B cell (primary cell): ENCODE measurements at regions of chr1 and their contacts with region 1.

Region 1: DNA sequence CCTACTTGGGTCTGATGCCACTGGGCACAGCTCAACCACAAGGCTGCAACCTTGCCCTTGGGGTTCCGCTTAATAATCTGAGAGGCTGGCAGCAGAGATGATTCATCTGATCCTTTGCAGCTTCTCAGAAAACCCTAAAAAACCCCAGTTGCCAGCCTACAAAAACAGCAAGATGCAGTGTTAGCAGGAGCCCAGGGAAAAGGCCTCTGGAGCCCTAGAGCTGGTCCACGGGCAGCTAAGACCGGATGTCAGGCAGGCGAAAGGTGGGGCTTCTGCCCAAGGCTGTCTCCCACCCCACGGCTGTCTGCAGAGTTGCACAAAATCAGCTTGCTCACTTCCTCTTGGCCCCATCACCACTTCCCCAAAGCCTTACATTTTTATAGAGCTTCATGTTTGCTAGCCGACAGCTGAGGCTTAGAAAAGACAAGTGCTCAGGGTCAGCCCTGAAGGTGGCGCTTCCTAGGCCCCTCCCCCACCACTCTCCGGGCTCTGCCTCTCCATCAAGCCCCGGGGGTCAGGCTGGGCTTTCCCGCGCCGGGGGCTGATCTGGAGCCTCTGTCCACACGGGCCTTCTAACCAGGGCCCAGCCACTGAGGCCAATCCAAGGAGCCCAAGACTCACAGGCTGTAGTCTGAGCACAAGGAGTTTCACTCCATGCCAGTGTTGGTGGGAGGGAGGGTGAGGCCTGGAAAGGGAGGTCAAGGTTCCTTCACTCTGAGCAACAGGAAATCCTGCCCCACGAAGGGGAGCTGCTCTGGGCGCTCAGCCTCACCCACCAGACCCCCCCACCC is 4.2 kb upstream of the ADORA3 start:
- DNase-seq: peak; percentile 90
- ATAC-seq: peak; percentile 70
- H3K4me3 ChIP-seq: peak overlapping the region; percentile 12 to 62 (median 59)
- H3K4me3 Mint-ChIP-seq: peak overlapping the region; percentile 79
- H3K27ac ChIP-seq: peak overlapping the region; percentile 88 to 98
- H3K27ac Mint-ChIP-seq: peak overlapping the region; percentile 95
- H3K4me1 ChIP-seq: peaks cover 64 to 69% of the 10 kb centered on the region in 2 donors
- H3K4me1 Mint-ChIP-seq: peaks cover 57% of the 10 kb centered on the region
- H3K27me3 ChIP-seq: no peaks in the 10 kb centered on the region
- H3K27me3 Mint-ChIP-seq: no peaks in the 10 kb centered on the region
- CTCF ChIP-seq: no peak

Region 2: GRCh38 chr1:111222308-111223125 is 285.1 kb before region 1 on chr1:
- CTCF ChIA-PET with region 1: interaction called, 14 read pairs
- POLR2A ChIA-PET with region 1: interaction called, 3 read pairs
- intact Hi-C with region 1: no loop called
- DNase-seq: peak; percentile 83
- ATAC-seq: peak; percentile 48
- H3K4me3 ChIP-seq: peak overlapping the region in 3 of 5 experiments; percentile 3 to 26 (median 5)
- H3K4me3 Mint-ChIP-seq: peak overlapping the region; percentile 72
- H3K27ac ChIP-seq: peak overlapping the region; percentile 46 to 92
- H3K27ac Mint-ChIP-seq: peak overlapping the region; percentile 91
- H3K4me1 ChIP-seq: peaks cover 85 to 87% of the 10 kb centered on the region in 2 donors
- H3K4me1 Mint-ChIP-seq: peaks cover 82% of the 10 kb centered on the region
- H3K27me3 ChIP-seq: no peaks in the 10 kb centered on the region
- H3K27me3 Mint-ChIP-seq: no peaks in the 10 kb centered on the region
- CTCF ChIP-seq: peak; percentile 89

Region 3: DNA sequence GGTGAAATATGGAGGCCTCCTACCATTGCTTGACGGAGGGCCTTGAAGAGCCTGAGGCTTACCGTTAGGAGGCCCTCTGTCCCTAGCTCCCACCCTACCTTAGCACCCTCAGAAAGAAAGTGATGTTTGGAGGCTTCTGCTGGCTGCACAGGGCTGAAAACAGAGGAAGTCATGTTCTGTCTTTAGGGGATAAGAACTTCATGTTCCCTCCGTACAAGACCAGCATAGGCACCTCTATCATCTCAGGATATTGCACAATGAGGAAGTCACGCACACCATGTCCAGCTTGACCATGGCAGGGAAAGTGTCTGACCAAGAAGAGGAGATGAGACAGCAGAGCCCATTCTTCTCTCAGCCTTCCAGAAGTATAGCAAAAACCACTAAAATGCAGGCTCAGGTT is 18.0 kb before region 1 on chr1:
- CTCF ChIA-PET with region 1: interaction called, 276 read pairs
- POLR2A ChIA-PET with region 1: interaction called, 3 read pairs
- intact Hi-C with region 1: no loop called
- DNase-seq: no peak
- ATAC-seq: peak; percentile 81
- H3K4me3 ChIP-seq: no peak overlapping the region
- H3K4me3 Mint-ChIP-seq: no peak overlapping the region
- H3K27ac ChIP-seq: no peak overlapping the region
- H3K27ac Mint-ChIP-seq: peak overlapping the region; percentile 80
- H3K4me1 ChIP-seq: no peaks in the 10 kb centered on the region
- H3K4me1 Mint-ChIP-seq: peaks cover 9% of the 10 kb centered on the region
- H3K27me3 ChIP-seq: no peaks in the 10 kb centered on the region
- H3K27me3 Mint-ChIP-seq: no peaks in the 10 kb centered on the region
- CTCF ChIP-seq: peak; percentile 36

Region 4: DNA sequence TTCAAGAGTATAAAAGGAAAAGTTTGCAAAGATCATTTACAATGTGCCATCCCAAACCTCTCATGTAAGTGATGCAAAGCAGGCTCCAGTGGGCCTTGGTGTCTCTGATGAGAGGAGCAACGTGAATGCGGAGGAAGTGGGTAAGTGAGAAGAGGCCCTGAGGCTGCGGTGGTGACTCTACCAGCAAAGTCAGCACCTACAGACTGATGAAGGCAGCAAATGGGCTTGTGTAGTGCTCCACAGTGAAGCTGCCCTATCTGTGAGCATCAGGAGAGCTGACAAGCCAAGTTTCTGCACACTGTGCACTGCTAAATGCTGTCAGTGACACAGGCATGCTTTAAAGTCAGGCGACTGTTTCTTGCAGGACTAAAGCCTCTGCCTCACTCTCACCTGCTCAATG is 96.4 kb after region 1 on chr1:
- CTCF ChIA-PET with region 1: interaction called, 11 read pairs
- POLR2A ChIA-PET with region 1: no interaction called
- intact Hi-C with region 1: no loop called
- DNase-seq: peak; percentile 57
- ATAC-seq: peak; percentile 71
- H3K4me3 ChIP-seq: no peak overlapping the region
- H3K4me3 Mint-ChIP-seq: peak overlapping the region; percentile 47
- H3K27ac ChIP-seq: peak overlapping the region; percentile 12 to 14
- H3K27ac Mint-ChIP-seq: peak overlapping the region; percentile 83
- H3K4me1 ChIP-seq: peaks cover 50 to 57% of the 10 kb centered on the region in 2 donors
- H3K4me1 Mint-ChIP-seq: peaks cover 64% of the 10 kb centered on the region
- H3K27me3 ChIP-seq: no peaks in the 10 kb centered on the region
- H3K27me3 Mint-ChIP-seq: no peaks in the 10 kb centered on the region
- CTCF ChIP-seq: no peak

Region 5: DNA sequence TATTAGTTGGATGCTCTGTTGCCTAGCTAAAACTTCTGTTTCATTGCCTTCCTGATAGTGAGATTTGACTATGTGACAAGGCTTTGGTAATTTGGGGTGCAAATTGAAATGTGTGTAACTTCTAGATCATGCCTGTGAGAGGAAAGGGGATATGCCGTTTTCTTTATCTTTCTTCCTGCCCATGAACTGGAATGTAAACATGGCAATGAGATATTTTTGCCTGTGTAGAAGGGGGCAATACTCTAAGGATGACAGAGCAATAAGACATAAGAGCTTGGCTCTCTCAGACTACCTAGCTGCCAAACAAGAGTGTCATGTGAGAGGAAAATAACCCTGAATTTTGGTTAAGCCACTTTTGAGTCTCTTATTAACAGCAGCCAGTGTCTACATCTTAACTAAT is 161.7 kb after region 1 on chr1:
- CTCF ChIA-PET with region 1: interaction called, 19 read pairs
- POLR2A ChIA-PET with region 1: no interaction called
- intact Hi-C with region 1: no loop called
- DNase-seq: no peak
- ATAC-seq: no peak
- H3K4me3 ChIP-seq: no peak overlapping the region
- H3K4me3 Mint-ChIP-seq: no peak overlapping the region
- H3K27ac ChIP-seq: peak overlapping the region in 1 of 2 donors; percentile 24
- H3K27ac Mint-ChIP-seq: peak overlapping the region; percentile 34
- H3K4me1 ChIP-seq: peaks cover 10 to 16% of the 10 kb centered on the region in 2 donors
- H3K4me1 Mint-ChIP-seq: peaks cover 64% of the 10 kb centered on the region
- H3K27me3 ChIP-seq: no peaks in the 10 kb centered on the region
- H3K27me3 Mint-ChIP-seq: no peaks in the 10 kb centered on the region
- CTCF ChIP-seq: no peak

Region 6: DNA sequence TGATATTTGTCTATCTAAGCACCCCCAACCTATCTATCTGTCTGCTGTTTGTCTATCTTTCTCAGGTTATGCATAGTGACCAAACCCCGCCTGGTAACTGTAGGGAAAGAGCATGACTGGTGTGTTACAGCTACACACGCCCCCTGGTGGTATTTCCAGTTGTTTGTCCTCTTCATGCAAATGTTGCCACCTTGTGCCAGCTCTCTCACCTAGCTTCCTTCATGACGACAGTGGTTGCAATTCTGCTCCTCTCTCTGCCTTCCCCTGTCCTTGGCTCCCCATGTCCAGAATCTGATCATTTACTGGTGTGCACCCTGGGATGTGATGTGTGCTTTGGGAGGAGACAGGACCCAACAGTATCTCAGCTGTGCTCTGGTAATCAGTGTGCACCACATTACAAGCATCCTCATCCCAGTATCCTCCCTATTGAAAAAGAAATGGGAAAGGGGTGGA is 239.7 kb after region 1 on chr1:
- CTCF ChIA-PET with region 1: interaction called, 15 read pairs
- POLR2A ChIA-PET with region 1: no interaction called
- intact Hi-C with region 1: no loop called
- DNase-seq: peak; percentile 70
- ATAC-seq: peak; percentile 68
- H3K4me3 ChIP-seq: no peak overlapping the region
- H3K4me3 Mint-ChIP-seq: no peak overlapping the region
- H3K27ac ChIP-seq: no peak overlapping the region
- H3K27ac Mint-ChIP-seq: no peak overlapping the region
- H3K4me1 ChIP-seq: no peaks in the 10 kb centered on the region
- H3K4me1 Mint-ChIP-seq: peaks cover 2% of the 10 kb centered on the region
- H3K27me3 ChIP-seq: peaks cover 0 to 3% (median 0%) of the 10 kb centered on the region in 4 experiments
- H3K27me3 Mint-ChIP-seq: no peaks in the 10 kb centered on the region
- CTCF ChIP-seq: peak; percentile 47

Region 7: GRCh38 chr1:112581530-112582192 is 1074.1 kb after region 1 on chr1:
- CTCF ChIA-PET with region 1: no interaction called
- POLR2A ChIA-PET with region 1: no interaction called
- intact Hi-C with region 1: no loop called
- DNase-seq: no peak
- ATAC-seq: no peak
- H3K4me3 ChIP-seq: no peak overlapping the region
- H3K4me3 Mint-ChIP-seq: no peak overlapping the region
- H3K27ac ChIP-seq: no peak overlapping the region
- H3K27ac Mint-ChIP-seq: no peak overlapping the region
- H3K4me1 ChIP-seq: no peaks in the 10 kb centered on the region
- H3K4me1 Mint-ChIP-seq: no peaks in the 10 kb centered on the region
- H3K27me3 ChIP-seq: no peaks in the 10 kb centered on the region
- H3K27me3 Mint-ChIP-seq: no peaks in the 10 kb centered on the region
- CTCF ChIP-seq: no peak